ENCODE measurements at regions of chr3 and their contacts with region 1.

Region 1: GRCh38 chr3:16448639-16449070 is 64.8 kb downstream of the RFTN1 start:
- DNase-seq: peak; percentile 13
- H3K4me3 ChIP-seq: no peak overlapping the region
- H3K27ac ChIP-seq: no peak overlapping the region
- H3K4me1 ChIP-seq: no peaks in the 10 kb centered on the region
- H3K27me3 ChIP-seq: no peaks in the 10 kb centered on the region
- CTCF ChIP-seq: no peak
- POLR2A ChIP-seq: no peak

Region 2: DNA sequence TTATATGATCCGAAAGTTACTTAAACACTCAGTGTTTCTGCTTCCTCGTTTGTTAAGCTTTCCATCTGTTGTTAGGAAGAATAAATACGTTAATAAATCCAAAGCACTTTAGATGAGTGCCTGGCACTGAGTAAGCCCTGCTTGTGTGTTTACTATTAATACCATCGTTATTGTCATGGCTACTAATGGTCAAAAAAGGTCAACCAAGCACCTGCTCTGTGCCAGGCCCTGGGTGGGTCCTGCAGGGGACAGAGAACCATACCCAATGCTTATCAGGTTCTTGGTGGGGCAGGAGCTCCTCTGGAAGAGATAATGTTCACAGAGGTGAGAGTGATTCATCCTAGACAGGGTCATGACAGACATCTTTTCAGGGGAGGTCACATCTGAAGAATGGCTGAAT is 234.3 kb before region 1 on chr3:
- intact Hi-C with region 1: no loop called
- DNase-seq: no peak
- H3K4me3 ChIP-seq: no peak overlapping the region
- H3K27ac ChIP-seq: no peak overlapping the region
- H3K4me1 ChIP-seq: no peaks in the 10 kb centered on the region
- H3K27me3 ChIP-seq: no peaks in the 10 kb centered on the region
- CTCF ChIP-seq: no peak
- POLR2A ChIP-seq: no peak

Region 3: GRCh38 chr3:16402451-16402850 is 46.2 kb before region 1 on chr3:
- intact Hi-C with region 1: loop called (anchors 5 kb)
- DNase-seq: no peak
- H3K4me3 ChIP-seq: no peak overlapping the region
- H3K27ac ChIP-seq: no peak overlapping the region
- H3K4me1 ChIP-seq: no peaks in the 10 kb centered on the region
- H3K27me3 ChIP-seq: no peaks in the 10 kb centered on the region
- CTCF ChIP-seq: no peak
- POLR2A ChIP-seq: no peak